Cardiac septum (tissue), 1 donor: ENCODE measurements at regions of chr14 and their contacts with region 1.

Region 1: DNA sequence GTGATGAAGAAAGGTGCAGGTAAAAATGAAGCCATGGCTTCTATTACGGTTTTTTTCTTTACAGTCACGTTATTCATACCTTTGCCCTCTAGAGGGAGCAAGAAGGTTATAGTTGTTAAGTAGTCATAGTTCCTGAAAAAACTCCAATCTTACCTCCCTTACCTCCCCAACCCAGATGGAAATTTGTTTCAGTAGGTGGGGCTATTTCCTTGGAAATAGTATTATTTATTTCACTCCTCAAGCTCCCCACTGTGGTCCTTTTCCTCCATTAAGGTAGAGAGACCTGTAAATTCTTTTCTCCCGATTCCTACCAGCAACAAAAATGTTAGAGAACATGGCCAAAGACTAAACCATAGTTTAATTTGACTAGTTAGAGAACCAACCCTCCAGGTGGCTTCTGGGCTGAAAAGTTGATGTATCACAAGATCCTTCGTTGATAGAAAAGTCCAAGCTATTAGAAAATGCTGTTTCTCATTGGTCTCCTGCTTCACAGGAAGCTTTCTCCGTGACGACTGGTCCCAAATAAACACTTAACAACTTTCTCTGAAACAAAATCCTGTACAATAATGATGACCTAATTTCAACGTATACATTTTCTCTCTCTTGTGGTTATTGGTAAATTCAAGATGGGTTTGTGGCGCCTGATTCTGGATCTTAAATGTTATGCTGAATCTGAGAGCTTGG is 43.5 kb downstream of the TMX1 start:
- DNase-seq: no peak

Region 2: DNA sequence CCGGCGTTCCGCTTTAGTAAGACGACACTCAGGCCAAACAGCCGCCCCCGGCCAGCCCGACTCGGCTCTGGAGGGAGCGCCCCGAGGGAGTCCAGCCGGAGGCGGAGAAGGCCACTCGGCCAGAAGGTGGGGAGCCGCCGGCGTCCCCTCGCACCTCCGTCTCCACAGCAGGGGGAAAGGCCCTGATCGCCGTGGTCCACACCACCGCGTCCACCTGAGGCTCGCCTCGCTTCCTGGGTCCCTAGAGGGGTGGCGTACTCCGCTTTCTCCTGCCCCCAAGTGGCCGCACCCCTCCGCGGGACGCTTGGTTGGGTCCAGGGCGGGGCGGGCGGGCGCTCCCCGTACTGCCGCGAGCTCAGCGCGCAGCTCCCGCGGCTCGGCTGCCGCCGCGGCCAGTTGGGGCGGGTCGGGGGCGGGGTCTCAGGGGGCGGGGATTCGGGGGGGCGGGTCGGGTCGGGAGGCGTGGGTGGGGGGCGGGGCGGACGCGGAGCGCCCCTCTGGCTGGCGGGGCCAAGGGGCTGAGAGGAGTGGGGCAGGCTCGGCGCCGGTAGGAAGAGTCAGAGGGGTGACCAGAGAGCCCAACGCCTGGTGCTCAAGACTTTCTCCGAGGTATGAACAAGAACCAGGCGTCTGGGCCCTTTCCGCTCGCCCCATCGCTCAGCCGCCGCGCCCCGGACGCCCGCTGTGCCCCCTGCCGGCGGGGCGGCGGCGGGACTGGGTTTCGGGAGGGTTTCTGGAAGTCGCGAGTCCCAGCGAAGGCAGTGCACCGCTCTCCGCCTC is 368.0 kb after region 1 on chr14 and contains the start of gene FRMD6:
- intact Hi-C with region 1: loop called (anchors 5 kb)
- DNase-seq: peak; percentile 91
- total RNA-seq, gene FRMD6: 9.1 TPM

Region 3: GRCh38 chr14:51776102-51776894 is 492.8 kb after region 1 on chr14:
- intact Hi-C with region 1: loop called (anchors 2 kb)
- DNase-seq: no peak

Region 4: DNA sequence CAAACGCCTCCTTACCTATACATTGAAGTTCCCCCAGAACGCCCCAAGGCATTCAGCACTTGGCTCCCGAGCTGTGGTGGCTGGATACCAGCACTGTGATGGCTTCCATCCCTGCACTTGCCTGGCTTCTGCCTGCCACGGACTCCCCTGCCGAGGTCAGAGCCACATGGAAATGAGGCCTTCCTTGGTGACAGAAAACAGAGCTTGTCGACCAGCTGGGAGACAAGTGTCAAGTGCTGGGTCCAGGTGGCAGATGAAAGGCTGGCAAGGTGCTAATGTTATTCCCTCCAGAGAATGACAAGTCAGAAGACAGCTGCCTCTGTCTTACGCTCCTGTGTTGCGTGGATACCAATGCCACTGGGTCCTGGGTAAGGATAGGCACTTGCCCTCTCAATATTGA is 550.7 kb after region 1 on chr14:
- intact Hi-C with region 1: no loop called
- DNase-seq: no peak

Region 5: DNA sequence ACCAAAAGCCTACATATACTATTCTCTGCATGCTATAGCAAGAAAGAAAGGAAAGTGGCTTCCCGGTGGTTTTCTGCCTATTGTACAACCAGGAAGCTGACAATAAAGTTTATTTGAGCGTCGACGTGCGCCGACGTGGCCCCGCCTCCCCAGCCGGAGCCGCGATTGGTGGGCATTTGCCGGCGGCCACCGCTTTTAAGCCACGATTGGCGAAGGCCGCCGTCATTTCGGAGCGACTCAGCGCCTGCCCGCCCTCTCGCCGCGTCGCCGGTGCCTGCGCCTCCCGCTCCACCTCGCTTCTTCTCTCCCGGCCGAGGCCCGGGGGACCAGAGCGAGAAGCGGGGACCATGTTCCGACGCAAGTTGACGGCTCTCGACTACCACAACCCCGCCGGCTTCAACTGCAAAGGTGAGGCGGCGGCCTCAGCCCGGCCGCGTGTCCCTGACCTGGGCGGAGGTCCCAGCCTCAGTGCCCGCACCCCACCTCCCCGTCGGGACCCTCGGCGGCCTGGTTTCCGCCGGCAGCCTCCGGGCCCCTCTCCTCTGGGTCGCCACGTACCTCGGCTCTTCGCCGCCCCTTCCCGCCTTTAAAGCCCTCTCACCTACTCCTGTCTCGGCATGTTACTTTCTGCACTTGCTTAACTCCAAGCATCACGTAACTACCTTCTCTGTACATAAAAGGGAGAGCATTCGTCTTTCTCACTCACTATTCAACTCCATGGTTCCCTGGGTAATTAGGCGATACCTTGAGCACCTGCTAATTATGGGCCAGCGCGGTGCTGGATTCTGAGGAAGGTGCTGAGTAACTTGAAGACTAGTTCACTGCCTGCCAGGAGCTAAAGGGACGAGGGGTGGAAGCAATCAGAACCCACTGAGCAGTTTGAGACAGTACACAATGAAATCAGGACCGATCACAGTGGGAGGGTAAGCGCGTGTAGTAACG is 706.0 kb after region 1 on chr14 and contains the start of gene RTRAF:
- intact Hi-C with region 1: loop called (anchors 10 kb)
- DNase-seq: peak; percentile 98
- total RNA-seq, gene RTRAF: 159 TPM

Region 6: DNA sequence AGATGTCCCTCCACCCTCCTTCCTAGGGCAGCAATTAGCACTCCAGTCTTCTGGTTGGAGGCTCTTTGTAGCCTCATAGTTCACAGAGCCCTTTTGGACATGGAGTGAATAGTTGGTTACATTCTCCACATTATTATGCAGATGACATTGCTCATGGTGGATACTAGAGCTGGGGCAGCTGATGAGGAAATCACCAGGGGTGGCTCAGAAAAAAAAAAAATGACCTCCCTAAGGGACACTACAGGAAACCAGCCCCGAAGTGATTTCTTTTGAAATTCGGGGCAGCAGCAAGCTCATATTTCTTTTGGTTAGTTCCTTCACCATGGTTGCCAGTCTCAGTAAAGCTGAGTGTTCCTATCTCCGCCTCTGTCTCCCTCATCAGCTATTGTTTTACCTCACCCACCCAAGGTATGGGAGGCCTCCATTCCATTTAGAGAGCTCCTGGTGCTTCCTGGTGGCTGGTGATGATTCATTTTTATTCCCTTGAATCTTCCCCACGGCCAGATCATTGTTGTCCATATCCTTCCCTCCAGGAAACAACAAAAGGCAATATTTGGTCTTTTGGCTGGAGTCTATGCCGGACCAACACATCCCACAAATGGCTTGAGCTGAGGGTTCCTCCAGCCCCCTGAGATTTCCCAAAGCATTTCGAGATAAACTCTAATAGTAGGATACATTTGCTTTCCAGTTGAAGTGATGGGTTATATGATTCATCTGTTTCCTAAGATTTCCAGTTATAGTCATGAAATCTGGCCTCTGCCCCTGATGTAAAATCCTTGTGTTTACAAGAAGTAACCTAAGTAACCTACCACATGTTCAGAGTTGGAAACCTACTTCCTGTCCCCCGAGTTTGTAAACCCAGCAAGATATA is 841.5 kb after region 1 on chr14:
- intact Hi-C with region 1: loop called (anchors 10 kb)
- DNase-seq: no peak